HCT116 (cell line): ENCODE measurements at regions of chr6 and their contacts with region 1.

Region 1: GRCh38 chr6:13908955-13909381 is 15.8 kb upstream of the RNF182 start:
- DNase-seq: peak; percentile 71
- ATAC-seq: peak; percentile 87
- H3K4me3 ChIP-seq: no peak overlapping the region
- H3K27ac ChIP-seq: no peak overlapping the region
- H3K4me1 ChIP-seq: peaks cover 7 to 15% of the 10 kb centered on the region in 2 experiments; a peak in 3 of 4 replicates
- H3K27me3 ChIP-seq: peaks cover 13% of the 10 kb centered on the region
- CTCF ChIP-seq: peak; percentile 65 to 91 (median 91)
- POLR2A ChIP-seq: no peak
- RAD21 ChIP-seq: peak; percentile 99

Region 2: GRCh38 chr6:13795041-13795750 is 113.8 kb before region 1 on chr6:
- CTCF ChIA-PET with region 1: interaction called, 4 read pairs
- POLR2A ChIA-PET with region 1: no interaction called
- RAD21 ChIA-PET with region 1: no interaction called
- intact Hi-C with region 1: loop called (anchors 2 kb)
- DNase-seq: peak; percentile 46
- ATAC-seq: peak; percentile 94
- H3K4me3 ChIP-seq: no peak overlapping the region
- H3K27ac ChIP-seq: no peak overlapping the region
- H3K4me1 ChIP-seq: no peaks in the 10 kb centered on the region
- H3K27me3 ChIP-seq: no peaks in the 10 kb centered on the region
- CTCF ChIP-seq: peak; percentile 65 to 95 (median 88)
- POLR2A ChIP-seq: no peak
- RAD21 ChIP-seq: peak; percentile 81

Region 3: DNA sequence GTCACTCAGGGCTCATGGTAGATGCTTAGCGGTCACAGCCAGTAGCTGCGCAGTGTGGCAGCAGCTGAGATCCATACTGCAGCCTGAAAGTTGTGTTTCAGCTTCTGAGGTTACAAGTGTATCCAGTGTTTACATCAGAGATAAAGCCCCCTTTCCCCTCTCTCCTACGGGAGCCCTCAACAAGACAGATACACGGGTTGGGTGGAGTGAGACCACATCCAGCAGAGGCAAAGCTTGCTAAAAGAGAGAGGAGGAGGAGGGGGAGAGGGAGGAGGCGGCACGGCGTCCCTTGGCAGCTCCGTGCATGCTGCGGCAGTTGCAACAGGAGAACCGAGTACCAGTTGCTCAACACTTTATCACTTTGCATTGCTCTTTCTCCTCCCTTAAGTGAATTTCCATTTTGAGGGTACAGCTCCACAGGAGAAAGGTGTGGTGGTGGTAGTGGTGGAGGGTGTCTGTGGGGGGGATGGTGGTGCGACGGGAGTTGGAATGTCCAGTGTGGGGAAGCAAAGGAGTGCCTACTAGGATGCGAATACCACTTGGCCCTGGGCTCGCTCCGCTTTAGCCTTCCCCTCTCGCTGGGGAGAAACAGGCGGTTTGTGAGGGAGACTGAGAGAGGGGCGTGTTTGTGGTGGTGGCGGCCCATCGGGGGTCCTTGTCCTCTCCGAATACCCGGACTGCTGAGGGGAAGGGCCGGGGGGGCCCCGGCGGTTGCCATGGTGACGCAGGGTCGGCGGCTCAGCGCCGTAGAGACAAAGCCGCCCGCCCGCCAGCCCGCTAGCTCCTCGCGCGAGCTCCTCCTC is 15.4 kb after region 1 on chr6:
- CTCF ChIA-PET with region 1: interaction called, 10 read pairs
- POLR2A ChIA-PET with region 1: no interaction called
- RAD21 ChIA-PET with region 1: interaction called in 1 of 2 experiments, 3 read pairs
- intact Hi-C with region 1: no loop called
- DNase-seq: no peak
- ATAC-seq: peak; percentile 87
- H3K4me3 ChIP-seq: peak overlapping the region; percentile 65 to 76
- H3K27ac ChIP-seq: peak overlapping the region; percentile 37; the same call in 1 of the 2 replicates
- H3K4me1 ChIP-seq: peaks cover 8 to 19% of the 10 kb centered on the region in 2 experiments; a peak in 3 of 4 replicates
- H3K27me3 ChIP-seq: no peaks in the 10 kb centered on the region
- CTCF ChIP-seq: no peak
- POLR2A ChIP-seq: no peak
- RAD21 ChIP-seq: no peak

Region 4: DNA sequence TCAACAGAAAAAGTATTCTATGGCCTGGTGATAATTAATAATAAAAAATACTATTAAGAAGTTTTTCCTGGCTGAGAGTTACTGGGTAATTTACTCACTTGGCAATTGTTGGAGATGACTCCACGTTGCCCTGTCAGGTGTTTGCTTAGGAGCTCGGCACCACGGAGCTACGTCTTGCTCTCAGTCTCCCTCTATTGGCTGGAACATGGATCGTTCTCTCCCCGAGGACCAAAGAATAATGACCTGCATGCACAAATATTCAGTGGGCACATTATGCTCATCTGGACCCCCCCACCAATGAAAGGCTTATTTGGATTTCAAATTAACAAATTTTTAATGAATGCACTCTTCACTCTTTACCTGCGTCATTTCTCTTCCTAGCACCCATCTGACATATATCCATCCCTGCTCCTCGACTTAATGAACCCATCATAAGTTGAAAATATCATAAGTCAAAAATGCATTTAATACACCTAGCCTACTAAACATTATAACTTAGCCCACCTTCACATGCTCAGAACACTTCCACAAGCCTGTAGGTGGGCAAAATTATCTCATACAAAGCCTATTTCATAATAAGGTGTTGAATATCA is 137.6 kb after region 1 on chr6:
- CTCF ChIA-PET with region 1: interaction called, 52 read pairs
- POLR2A ChIA-PET with region 1: interaction called, 3 read pairs
- RAD21 ChIA-PET with region 1: interaction called, 6 to 7 read pairs
- intact Hi-C with region 1: loop called (anchors 1 kb)
- DNase-seq: peak; percentile 51
- ATAC-seq: peak; percentile 96
- H3K4me3 ChIP-seq: no peak overlapping the region
- H3K27ac ChIP-seq: no peak overlapping the region
- H3K4me1 ChIP-seq: peaks cover 0 to 6% of the 10 kb centered on the region in 2 experiments; a peak in 2 of 4 replicates
- H3K27me3 ChIP-seq: no peaks in the 10 kb centered on the region
- CTCF ChIP-seq: peak; percentile 64 to 76 (median 68); a peak in 5 of 6 replicates
- POLR2A ChIP-seq: no peak
- RAD21 ChIP-seq: peak; percentile 78

Region 5: DNA sequence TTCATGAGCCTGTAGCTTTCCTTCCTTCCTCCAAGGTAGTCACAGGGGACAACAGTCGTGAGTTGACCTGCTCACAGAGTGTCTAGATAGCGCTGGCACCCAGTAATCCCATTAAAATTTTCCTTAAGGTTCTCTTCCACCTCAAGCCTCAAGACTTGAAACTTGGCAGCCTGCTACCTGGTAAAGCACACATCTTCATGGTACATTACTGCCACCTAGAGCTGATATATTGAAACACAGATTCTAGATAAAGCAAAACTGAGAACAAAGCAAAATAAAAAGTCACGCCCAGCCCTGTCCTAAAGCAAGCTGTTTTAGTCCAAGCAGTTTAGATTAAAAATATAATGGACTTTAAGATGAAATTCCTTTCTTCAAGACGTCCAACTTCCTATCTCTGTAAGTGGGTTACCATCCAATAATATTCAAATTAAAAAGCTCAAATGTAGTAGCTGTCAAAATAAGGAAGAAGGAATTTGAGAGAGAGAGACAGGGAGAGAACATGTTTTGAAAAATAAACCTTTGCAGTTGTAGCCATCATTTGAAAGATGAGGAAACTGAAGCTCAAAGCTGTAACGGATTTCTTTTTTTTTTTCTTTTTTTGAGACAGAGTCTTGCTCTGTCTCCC is 157.9 kb after region 1 on chr6:
- CTCF ChIA-PET with region 1: interaction called, 67 read pairs
- POLR2A ChIA-PET with region 1: no interaction called
- RAD21 ChIA-PET with region 1: interaction called, 4 to 15 read pairs
- intact Hi-C with region 1: loop called (anchors 1 kb)
- DNase-seq: peak; percentile 68
- ATAC-seq: peak; percentile 88
- H3K4me3 ChIP-seq: no peak overlapping the region
- H3K27ac ChIP-seq: no peak overlapping the region
- H3K4me1 ChIP-seq: peaks cover 0 to 4% of the 10 kb centered on the region in 2 experiments; a peak in 1 of 4 replicates
- H3K27me3 ChIP-seq: no peaks in the 10 kb centered on the region
- CTCF ChIP-seq: peak; percentile 50 to 90 (median 67)
- POLR2A ChIP-seq: no peak
- RAD21 ChIP-seq: peak; percentile 93

Region 6: GRCh38 chr6:14144678-14145113 is 235.7 kb after region 1 on chr6:
- CTCF ChIA-PET with region 1: interaction called, 17 read pairs
- POLR2A ChIA-PET with region 1: no interaction called
- RAD21 ChIA-PET with region 1: interaction called in 1 of 2 experiments, 5 read pairs
- intact Hi-C with region 1: loop called (anchors 1 kb)
- DNase-seq: peak; percentile 69
- ATAC-seq: peak; percentile 100
- H3K4me3 ChIP-seq: no peak overlapping the region
- H3K27ac ChIP-seq: no peak overlapping the region
- H3K4me1 ChIP-seq: no peaks in the 10 kb centered on the region
- H3K27me3 ChIP-seq: no peaks in the 10 kb centered on the region
- CTCF ChIP-seq: peak; percentile 74 to 97 (median 93)
- POLR2A ChIP-seq: no peak
- RAD21 ChIP-seq: peak; percentile 82